GM13977 (cell line): ENCODE measurements at regions of chr7 and their contacts with region 1.

Region 1: DNA sequence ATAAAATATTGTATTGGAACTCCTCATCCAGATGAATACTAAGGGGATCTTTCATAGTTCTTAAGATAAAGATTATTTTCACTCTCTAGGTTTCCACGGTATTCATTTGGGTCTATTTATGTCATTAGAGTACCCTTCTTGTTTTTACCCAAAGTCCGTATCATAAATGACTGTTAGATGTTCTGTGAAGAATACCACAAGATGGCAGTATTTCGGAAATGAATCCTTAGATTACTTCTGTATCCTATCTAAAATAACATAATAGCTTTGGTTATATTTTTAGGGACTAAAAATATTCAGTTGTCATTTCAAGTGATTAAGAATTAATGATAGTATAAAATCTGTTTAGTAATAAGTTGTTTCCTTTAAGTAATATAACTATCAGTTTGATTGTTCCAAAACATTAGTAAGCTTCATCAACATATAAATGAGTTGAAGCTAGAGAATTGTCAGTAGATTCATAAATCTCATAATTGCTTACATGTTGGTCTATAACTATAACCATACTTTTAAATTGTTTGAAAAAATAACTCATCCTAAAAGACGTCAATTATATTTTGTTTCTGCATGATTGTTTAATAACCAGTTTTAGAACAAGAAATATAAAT is 337.5 kb upstream of the KCND2 start:
- DNase-seq: peak; percentile 8
- CTCF ChIP-seq: peak; percentile 51

Region 2: GRCh38 chr7:120272261-120272660 is 336.7 kb after region 1 on chr7:
- in situ Hi-C with region 1: loop called (anchors 25 kb)
- DNase-seq: peak; percentile 79
- CTCF ChIP-seq: peak; percentile 74

Region 3: DNA sequence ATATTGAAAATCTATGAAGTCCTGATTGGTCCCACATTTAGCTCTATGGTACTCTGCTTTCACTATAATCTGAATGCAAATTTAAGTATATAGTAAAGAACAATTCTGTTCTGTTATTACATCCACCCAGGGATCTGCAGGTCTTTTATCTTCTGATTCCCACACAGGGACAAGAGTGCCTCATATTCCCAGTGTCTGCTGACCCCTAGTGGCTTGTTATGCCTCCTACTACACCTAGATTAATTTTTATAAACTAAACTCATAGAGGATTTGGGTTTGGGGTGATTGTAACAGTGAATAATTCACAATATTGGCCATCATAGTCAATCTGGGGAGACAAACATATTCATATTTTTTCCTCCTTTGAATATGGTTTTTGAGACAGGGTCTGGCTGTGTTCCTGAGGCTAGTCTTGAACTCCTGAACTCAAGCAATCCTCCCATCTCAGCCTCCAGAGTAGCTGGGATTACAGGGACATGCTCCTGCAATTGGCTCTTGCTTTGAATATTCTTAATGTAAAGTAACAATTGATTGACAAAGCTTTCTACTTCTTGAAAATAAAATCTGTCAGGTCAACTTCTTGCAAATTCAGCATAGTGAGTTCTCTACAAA is 619.5 kb after region 1 on chr7:
- in situ Hi-C with region 1: loop called (anchors 10 kb)
- DNase-seq: peak; percentile 23
- CTCF ChIP-seq: peak; percentile 64

Region 4: DNA sequence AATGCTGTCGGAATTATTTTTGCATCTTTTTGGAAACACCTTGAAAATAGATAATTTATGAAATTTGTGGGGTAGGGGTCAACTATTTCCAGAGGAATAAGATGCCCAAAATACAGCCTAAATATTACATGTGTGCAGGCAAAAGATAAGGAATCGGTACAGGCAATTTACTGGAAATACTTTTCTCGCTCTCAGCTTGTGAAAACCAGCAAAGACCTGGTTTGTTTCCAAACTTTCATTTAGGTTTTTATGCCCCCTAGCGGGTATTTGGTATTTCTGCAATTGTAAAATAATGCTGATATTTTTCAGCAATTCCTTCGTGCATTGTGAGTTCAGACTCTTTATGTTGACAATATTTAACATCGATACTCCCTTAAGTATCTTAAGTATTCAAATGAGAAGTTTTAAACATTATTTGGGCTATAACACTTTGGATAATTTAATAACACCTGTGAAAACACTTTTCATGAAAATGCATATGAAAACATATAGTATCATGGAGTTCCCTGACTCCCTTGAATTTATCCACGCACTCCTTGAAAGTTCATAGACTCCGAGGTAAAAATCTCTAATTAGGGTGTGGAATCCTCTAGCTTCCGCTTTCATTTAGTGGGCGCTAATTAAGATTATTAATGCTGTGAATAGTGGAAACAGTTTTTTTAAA is 790.0 kb after region 1 on chr7:
- in situ Hi-C with region 1: loop called (anchors 25 kb)
- DNase-seq: peak; percentile 14
- CTCF ChIP-seq: peak; percentile 56